Activated CD8-positive, alpha-beta T cell treated with anti-CD3 and anti-CD28 coated beads for 36 hours (primary cell): ENCODE measurements at regions of chr3 and their contacts with region 1.

Region 1: GRCh38 chr3:16048435-16049318 is 125.8 kb upstream of the GALNT15 start:
- DNase-seq: peak; percentile 68
- ATAC-seq: peak; percentile 95
- H3K4me3 Mint-ChIP-seq: no peak overlapping the region
- H3K27ac Mint-ChIP-seq: no peak overlapping the region
- H3K4me1 Mint-ChIP-seq: peaks cover 2% of the 10 kb centered on the region
- H3K27me3 Mint-ChIP-seq: no peaks in the 10 kb centered on the region
- CTCF ChIP-seq: peak; percentile 79

Region 2: GRCh38 chr3:16033889-16034687 is 14.6 kb before region 1 on chr3:
- CTCF ChIA-PET with region 1: interaction called, 10 read pairs
- POLR2A ChIA-PET with region 1: interaction called, 3 read pairs
- intact Hi-C with region 1: no loop called
- DNase-seq: no peak
- ATAC-seq: no peak
- H3K4me3 Mint-ChIP-seq: no peak overlapping the region
- H3K27ac Mint-ChIP-seq: no peak overlapping the region
- H3K4me1 Mint-ChIP-seq: no peaks in the 10 kb centered on the region
- H3K27me3 Mint-ChIP-seq: peaks cover 9% of the 10 kb centered on the region
- CTCF ChIP-seq: no peak

Region 3: DNA sequence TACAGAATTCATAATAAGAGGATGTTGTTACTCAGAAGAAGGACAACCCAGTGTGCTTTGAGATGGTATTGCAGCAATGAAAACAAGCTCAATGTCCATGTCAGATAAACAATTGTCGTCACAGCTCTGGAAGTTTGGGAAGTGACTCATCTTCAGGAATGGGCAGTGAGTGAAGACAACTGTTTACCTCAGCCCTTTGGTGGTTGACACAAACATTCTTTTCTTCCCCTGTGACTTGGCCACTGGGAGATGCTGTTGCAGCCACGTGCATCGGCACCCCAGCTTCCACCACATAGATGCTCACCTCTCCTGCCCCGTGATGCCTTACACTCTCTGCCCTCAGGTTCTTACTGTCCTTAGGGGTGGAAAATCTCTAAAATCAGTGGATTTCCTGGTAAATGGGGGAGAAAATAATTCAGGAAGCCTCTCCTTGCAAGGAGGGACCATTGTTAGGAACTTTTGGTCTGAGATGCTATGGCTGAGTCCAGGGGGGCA is 11.7 kb after region 1 on chr3:
- CTCF ChIA-PET with region 1: interaction called, 19 read pairs
- POLR2A ChIA-PET with region 1: interaction called, 3 read pairs
- intact Hi-C with region 1: no loop called
- DNase-seq: no peak
- ATAC-seq: no peak
- H3K4me3 Mint-ChIP-seq: no peak overlapping the region
- H3K27ac Mint-ChIP-seq: no peak overlapping the region
- H3K4me1 Mint-ChIP-seq: peaks cover 3% of the 10 kb centered on the region
- H3K27me3 Mint-ChIP-seq: no peaks in the 10 kb centered on the region
- CTCF ChIP-seq: no peak

Region 4: GRCh38 chr3:16177962-16178627 is 129.4 kb after region 1 on chr3:
- CTCF ChIA-PET with region 1: interaction called, 56 read pairs
- POLR2A ChIA-PET with region 1: interaction called, 3 read pairs
- intact Hi-C with region 1: loop called (anchors 1 kb)
- DNase-seq: peak; percentile 76
- ATAC-seq: peak; percentile 88
- H3K4me3 Mint-ChIP-seq: no peak overlapping the region
- H3K27ac Mint-ChIP-seq: no peak overlapping the region
- H3K4me1 Mint-ChIP-seq: no peaks in the 10 kb centered on the region
- H3K27me3 Mint-ChIP-seq: peaks cover 18% of the 10 kb centered on the region
- CTCF ChIP-seq: peak; percentile 96

Region 5: GRCh38 chr3:16183601-16184270 is 135.1 kb after region 1 on chr3:
- CTCF ChIA-PET with region 1: interaction called, 56 read pairs
- POLR2A ChIA-PET with region 1: no interaction called
- intact Hi-C with region 1: loop called (anchors 1 kb)
- DNase-seq: no peak
- ATAC-seq: no peak
- H3K4me3 Mint-ChIP-seq: no peak overlapping the region
- H3K27ac Mint-ChIP-seq: no peak overlapping the region
- H3K4me1 Mint-ChIP-seq: no peaks in the 10 kb centered on the region
- H3K27me3 Mint-ChIP-seq: peaks cover 4% of the 10 kb centered on the region
- CTCF ChIP-seq: no peak

Region 6: GRCh38 chr3:16247276-16248061 is 198.8 kb after region 1 on chr3:
- CTCF ChIA-PET with region 1: interaction called, 32 read pairs
- POLR2A ChIA-PET with region 1: interaction called, 5 read pairs
- intact Hi-C with region 1: loop called (anchors 1 kb)
- DNase-seq: peak; percentile 88
- ATAC-seq: peak; percentile 90
- H3K4me3 Mint-ChIP-seq: no peak overlapping the region
- H3K27ac Mint-ChIP-seq: peak overlapping the region; percentile 77
- H3K4me1 Mint-ChIP-seq: peaks cover 7% of the 10 kb centered on the region
- H3K27me3 Mint-ChIP-seq: no peaks in the 10 kb centered on the region
- CTCF ChIP-seq: peak; percentile 95